ENCODE measurements at regions of chr2 and their contacts with region 1.

Region 1: DNA sequence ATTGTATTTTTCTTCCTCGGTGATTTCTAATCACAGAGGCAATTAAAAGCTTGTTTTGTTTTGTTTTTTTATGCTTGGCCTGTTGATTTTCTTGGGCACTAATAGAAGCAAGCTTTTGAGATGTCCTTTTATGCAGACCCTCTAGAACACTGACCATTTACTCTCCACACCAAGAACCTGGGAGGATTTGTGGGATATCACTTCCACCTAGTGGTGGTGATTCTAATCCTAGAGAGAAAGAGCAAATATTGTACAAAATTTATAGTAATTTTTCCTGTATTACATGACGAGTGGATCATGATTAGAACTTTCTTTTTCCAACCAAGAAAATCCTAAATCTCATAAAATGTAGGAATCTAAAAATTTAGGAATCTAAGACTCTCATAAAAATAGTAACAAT is 23.4 kb downstream of the NEMP2 start:
- DNase-seq: no peak
- H3K4me3 ChIP-seq: no peak overlapping the region
- H3K27ac ChIP-seq: no peak overlapping the region
- H3K4me1 ChIP-seq: peaks cover 0 to 12% (median 9%) of the 10 kb centered on the region in 4 donors
- H3K27me3 ChIP-seq: no peaks in the 10 kb centered on the region
- CTCF ChIP-seq: peak; percentile 54 to 56 (median 56)
- EP300 ChIP-seq: no peak
- POLR2A ChIP-seq: no peak

Region 2: GRCh38 chr2:190382851-190383250 is 128.3 kb before region 1 on chr2:
- intact Hi-C with region 1: loop called (anchors 2 kb)
- DNase-seq: no peak
- H3K4me3 ChIP-seq: no peak overlapping the region
- H3K27ac ChIP-seq: no peak overlapping the region
- H3K4me1 ChIP-seq: no peaks in the 10 kb centered on the region
- H3K27me3 ChIP-seq: no peaks in the 10 kb centered on the region
- CTCF ChIP-seq: peak; percentile 49 to 67 (median 62)
- EP300 ChIP-seq: no peak
- POLR2A ChIP-seq: no peak

Region 3: GRCh38 chr2:190408538-190409271 is 102.4 kb before region 1 on chr2:
- intact Hi-C with region 1: loop called (anchors 5 kb)
- DNase-seq: no peak
- H3K4me3 ChIP-seq: peak overlapping the region; percentile 86 to 92 (median 90)
- H3K27ac ChIP-seq: peak overlapping the region; percentile 87 to 92 (median 90)
- H3K4me1 ChIP-seq: peaks cover 17 to 55% (median 46%) of the 10 kb centered on the region in 4 donors
- H3K27me3 ChIP-seq: no peaks in the 10 kb centered on the region
- CTCF ChIP-seq: no peak
- EP300 ChIP-seq: no peak
- POLR2A ChIP-seq: no peak

Measured in esophagus muscularis mucosa (tissue), 4 donors.